PC-9 (cell line): ENCODE measurements at regions of chr16 and their contacts with region 1.

Region 1: GRCh38 chr16:27154705-27155521 is 48.4 kb upstream of the KDM8 start:
- DNase-seq: peak in 1 of 2 experiments; percentile 47
- H3K4me3 ChIP-seq: no peak overlapping the region
- H3K27ac ChIP-seq: no peak overlapping the region
- H3K4me1 ChIP-seq: no peaks in the 10 kb centered on the region
- H3K27me3 ChIP-seq: peaks cover 19% of the 10 kb centered on the region; the same call in 1 of the 2 replicates
- CTCF ChIP-seq: peak; percentile 100

Region 2: DNA sequence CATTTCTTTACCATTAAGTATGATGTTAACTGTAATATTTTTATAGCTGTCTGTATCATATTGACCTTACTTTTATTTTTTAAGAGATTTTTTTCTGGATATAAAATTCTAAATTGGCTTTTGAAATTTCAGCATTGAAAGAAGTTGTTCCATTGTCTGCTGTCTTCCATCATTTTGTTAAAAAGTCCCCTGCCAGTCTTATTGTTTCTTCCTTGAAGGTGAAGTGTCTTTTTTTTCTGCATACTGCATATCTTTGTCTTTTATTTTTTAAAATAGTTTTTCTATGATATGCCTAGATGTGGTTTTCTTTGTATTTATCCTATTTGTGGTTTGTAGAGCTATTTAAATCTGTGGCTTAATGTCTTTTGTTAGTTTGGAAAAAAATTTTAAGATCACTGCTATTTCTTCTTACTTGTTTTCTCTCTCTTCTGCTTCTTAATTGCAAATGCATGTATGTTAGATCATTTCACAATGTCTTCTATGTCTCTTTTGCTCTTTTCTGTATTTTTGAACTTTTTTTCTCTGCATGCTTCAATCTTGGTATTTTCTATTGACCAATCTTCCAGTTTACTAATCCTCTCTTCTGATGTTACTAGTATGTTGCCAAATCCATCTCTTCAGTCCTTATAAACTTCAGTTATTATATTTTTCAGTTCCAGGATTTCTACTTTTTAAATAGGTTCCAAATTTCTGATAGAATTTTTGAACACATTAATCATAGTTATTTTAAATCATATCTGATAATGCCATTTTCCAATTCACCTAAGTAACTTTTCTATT is 267.2 kb after region 1 on chr16:
- CTCF ChIA-PET with region 1: no interaction called
- POLR2A ChIA-PET with region 1: interaction called, 12 read pairs
- intact Hi-C with region 1: no loop called
- DNase-seq: no peak
- H3K4me3 ChIP-seq: no peak overlapping the region
- H3K27ac ChIP-seq: no peak overlapping the region
- H3K4me1 ChIP-seq: no peaks in the 10 kb centered on the region
- H3K27me3 ChIP-seq: no peaks in the 10 kb centered on the region
- CTCF ChIP-seq: no peak